HepG2 (cell line): ENCODE measurements at regions of chrX and their contacts with region 1.

Region 1: GRCh38 chrX:53224860-53225797 is at the start of gene KDM5C:
- DNase-seq: peak; percentile 84
- ATAC-seq: peak; percentile 86
- H3K4me3 ChIP-seq: peak within 1 kb of the TSS; percentile 83 to 89 (median 87)
- H3K27ac ChIP-seq: peak within 1 kb of the TSS; percentile 95
- H3K4me1 ChIP-seq: peaks cover 34% of the 10 kb centered on the region
- H3K27me3 ChIP-seq: no peaks in the 10 kb centered on the region; a peak in 2 of 5 replicates
- CTCF ChIP-seq: no peak
- EP300 ChIP-seq: no peak
- POLR2A ChIP-seq: peak; percentile 68 to 73
- RAD21 ChIP-seq: no peak
- total RNA-seq, gene KDM5C: 26.0 and 32.5 TPM in 2 replicates

Region 2: DNA sequence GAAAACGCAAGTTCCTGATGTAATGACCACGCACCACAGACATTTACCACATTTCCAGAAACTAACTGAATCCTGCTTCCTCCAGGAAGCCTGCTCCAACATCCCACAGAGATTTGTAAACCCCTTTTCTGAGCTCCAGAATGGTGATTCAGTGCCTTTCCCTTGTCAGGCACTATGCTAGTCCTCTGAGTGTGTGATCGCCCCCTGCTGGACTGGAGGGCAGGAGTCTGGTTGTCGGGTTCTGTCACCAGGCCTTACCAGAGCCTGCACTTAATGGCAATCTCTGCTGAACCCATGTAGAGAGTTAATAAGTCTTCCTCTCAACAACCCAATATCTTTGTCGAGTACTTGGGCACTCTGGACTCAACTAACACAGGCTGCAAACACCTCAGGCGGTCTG is 14.3 kb after region 1 on chrX:
- CTCF ChIA-PET with region 1: no interaction called
- POLR2A ChIA-PET with region 1: interaction called, 4 read pairs
- in situ Hi-C with region 1: no loop called
- intact Hi-C with region 1: loop called (anchors 1 kb)
- DNase-seq: peak; percentile 35
- ATAC-seq: peak; percentile 80
- H3K4me3 ChIP-seq: no peak overlapping the region
- H3K27ac ChIP-seq: no peak overlapping the region
- H3K4me1 ChIP-seq: 0 out of 2 replicates have a peak, but pooled peaks cover 14% of the 10 kb centered on the region
- H3K27me3 ChIP-seq: no peaks in the 10 kb centered on the region; a peak in 1 of 5 replicates
- CTCF ChIP-seq: peak; percentile 46
- EP300 ChIP-seq: no peak
- POLR2A ChIP-seq: no peak
- RAD21 ChIP-seq: no peak

Region 3: DNA sequence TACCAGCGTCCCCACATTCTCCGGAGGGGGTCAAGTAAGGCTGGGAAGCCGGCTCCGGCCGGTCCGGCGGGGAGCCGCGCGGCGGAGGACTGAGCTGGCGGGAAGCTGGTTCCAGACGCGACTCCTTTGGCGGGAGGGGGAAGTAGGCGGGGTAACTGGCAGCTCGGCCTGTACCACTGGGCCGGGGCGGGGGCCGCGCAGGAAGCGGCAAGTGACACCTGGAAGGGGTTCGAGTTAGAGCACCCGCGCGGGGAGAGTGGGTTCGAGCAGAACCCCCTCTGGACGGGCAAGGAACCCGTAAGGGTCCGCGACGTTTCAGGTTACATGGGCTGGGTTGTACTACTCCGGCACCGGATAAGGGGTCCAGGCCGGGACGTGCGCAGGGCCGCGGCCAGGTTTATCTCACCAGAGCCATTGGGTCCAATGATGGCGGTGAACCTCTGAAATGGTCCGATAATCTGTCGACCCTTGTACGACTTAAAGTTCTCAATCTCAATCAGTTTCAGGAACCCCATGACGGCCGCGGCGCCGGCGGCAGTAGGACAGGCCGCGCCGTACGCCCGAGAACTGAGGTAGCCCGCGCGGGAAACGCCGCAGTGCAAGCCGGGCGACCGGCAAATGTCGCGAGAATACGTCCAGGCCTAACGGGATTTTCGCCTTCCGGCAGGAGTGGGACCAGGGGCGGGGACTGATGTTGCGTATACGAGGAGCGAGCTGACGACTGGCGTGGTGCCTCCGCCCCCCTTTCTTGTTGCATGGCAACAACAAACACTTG is 197.1 kb after region 1 on chrX and contains the start of gene SMC1A:
- CTCF ChIA-PET with region 1: no interaction called
- POLR2A ChIA-PET with region 1: interaction called, 4 read pairs
- in situ Hi-C with region 1: no loop called
- intact Hi-C with region 1: loop called (anchors 5 kb)
- DNase-seq: peak; percentile 87
- ATAC-seq: peak; percentile 94
- H3K4me3 ChIP-seq: peak within 1 kb of the TSS; percentile 73 to 80 (median 80)
- H3K27ac ChIP-seq: peak within 1 kb of the TSS; percentile 94
- H3K4me1 ChIP-seq: peaks cover 16% of the 10 kb centered on the region
- H3K27me3 ChIP-seq: no peaks in the 10 kb centered on the region
- CTCF ChIP-seq: no peak
- EP300 ChIP-seq: no peak
- POLR2A ChIP-seq: peak; percentile 52 to 79; a peak in 3 of 4 replicates
- RAD21 ChIP-seq: no peak
- total RNA-seq, gene SMC1A: 46.6 and 73.4 TPM in 2 replicates